HepG2 (cell line): ENCODE measurements at regions of chr5 and their contacts with region 1.

Region 1: DNA sequence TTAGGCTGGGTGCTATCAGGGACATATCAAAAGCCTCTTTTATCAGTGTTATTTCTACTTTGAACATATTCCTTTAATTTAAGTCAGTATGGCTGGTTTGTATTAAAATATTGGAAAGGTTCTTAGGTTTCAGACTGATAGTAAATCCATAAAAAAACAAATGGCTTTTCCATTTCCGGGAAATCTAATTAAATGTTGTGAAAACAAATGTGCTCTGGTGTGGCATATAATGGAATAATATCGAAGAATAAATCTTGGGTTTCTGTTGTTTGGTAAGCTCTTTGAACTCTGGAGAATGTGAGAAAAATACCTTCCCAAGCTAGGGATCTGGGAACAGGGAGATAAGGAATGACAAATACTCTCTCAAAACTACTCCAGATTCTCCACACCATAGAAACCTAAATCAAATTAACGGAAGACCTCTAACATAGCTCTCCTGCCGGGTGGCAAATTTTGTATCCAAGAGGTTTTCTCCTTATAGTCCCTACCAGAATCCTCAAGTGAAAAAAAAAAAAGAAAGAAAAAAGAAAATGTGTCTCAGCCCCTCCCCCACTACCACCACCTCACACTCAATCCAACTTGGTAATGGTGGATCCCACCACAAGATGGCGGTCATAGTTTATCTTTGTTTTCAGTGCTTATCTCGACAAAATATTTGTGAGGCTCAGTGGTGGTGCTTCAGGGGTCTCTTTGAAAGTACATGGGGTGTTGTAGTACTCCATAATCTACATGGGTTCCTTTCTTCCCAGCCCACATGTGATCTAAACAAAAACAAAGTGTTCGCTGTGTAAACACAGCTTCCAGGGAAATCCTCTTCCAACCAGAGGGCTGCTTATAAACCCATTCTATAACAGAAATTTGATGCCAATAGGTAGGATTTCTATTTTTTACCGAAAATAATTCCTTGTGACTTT is 54.6 kb upstream of the FST start:
- DNase-seq: peak; percentile 67
- ATAC-seq: peak; percentile 89
- H3K4me3 ChIP-seq: peak overlapping the region in 1 of 3 experiments; percentile 9; a peak in 1 of 6 replicates
- H3K27ac ChIP-seq: no peak overlapping the region
- H3K4me1 ChIP-seq: peaks cover 33% of the 10 kb centered on the region
- H3K27me3 ChIP-seq: no peaks in the 10 kb centered on the region
- CTCF ChIP-seq: peak; percentile 86
- EP300 ChIP-seq: no peak
- POLR2A ChIP-seq: no peak
- RAD21 ChIP-seq: peak; percentile 68; the same call in 1 of the 2 replicates

Region 2: GRCh38 chr5:53262348-53262970 is 163.4 kb before region 1 on chr5:
- CTCF ChIA-PET with region 1: interaction called, 3 read pairs
- POLR2A ChIA-PET with region 1: no interaction called
- in situ Hi-C with region 1: no loop called
- intact Hi-C with region 1: loop called (anchors 5 kb)
- DNase-seq: peak; percentile 2
- ATAC-seq: peak; percentile 48; the same call in 1 of the 3 replicates
- H3K4me3 ChIP-seq: no peak overlapping the region
- H3K27ac ChIP-seq: no peak overlapping the region
- H3K4me1 ChIP-seq: no peaks in the 10 kb centered on the region
- H3K27me3 ChIP-seq: no peaks in the 10 kb centered on the region
- CTCF ChIP-seq: peak; percentile 67
- EP300 ChIP-seq: no peak
- POLR2A ChIP-seq: no peak
- RAD21 ChIP-seq: no peak

Region 3: DNA sequence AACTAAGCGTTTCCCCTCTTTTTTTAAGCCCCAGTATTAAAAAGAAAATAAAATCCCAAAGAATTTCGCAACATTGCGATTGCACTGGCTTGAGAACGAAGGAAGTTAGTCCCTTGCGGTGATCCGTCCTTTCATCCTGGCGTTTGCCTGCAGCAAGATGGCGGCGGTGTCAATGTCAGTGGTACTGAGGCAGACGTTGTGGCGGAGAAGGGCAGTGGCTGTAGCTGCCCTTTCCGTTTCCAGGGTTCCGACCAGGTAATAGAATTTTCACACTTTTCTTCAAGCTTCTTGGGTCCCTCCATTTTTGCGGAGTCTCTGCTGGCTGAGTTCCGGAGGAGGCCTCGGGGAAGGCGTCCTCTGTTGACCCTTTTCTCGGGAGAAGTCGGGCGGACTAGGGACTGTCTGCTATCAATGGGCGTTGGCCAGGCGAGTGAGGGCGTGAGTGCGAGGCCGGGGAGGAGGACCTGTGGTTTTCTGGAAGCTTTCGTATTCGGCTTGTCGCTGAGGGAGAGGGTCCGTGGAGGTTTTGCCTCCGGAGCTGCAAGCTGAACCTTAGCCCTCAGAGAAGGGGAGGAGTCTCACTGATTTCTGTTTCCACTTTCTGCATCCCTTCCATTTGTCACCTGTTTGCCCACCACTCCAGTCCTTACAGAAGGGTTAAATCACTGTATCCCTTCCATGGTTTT is 134.8 kb after region 1 on chr5 and contains the start of gene NDUFS4:
- CTCF ChIA-PET with region 1: interaction called, 3 read pairs
- POLR2A ChIA-PET with region 1: no interaction called
- in situ Hi-C with region 1: no loop called
- intact Hi-C with region 1: loop called (anchors 5 kb)
- DNase-seq: peak; percentile 69
- ATAC-seq: peak; percentile 96
- H3K4me3 ChIP-seq: peak within 1 kb of the TSS; percentile 79 to 87 (median 81)
- H3K27ac ChIP-seq: peak within 1 kb of the TSS; percentile 82
- H3K4me1 ChIP-seq: peaks cover 33% of the 10 kb centered on the region
- H3K27me3 ChIP-seq: no peaks in the 10 kb centered on the region; a peak in 1 of 5 replicates
- CTCF ChIP-seq: no peak
- EP300 ChIP-seq: 0 out of 4 replicates have a peak, but pooled peaks of 1 of the 2 experiments have one; percentile 30
- POLR2A ChIP-seq: peak; percentile 76 to 85
- RAD21 ChIP-seq: no peak
- total RNA-seq, gene NDUFS4: 121 and 146 TPM in 2 replicates

Region 4: DNA sequence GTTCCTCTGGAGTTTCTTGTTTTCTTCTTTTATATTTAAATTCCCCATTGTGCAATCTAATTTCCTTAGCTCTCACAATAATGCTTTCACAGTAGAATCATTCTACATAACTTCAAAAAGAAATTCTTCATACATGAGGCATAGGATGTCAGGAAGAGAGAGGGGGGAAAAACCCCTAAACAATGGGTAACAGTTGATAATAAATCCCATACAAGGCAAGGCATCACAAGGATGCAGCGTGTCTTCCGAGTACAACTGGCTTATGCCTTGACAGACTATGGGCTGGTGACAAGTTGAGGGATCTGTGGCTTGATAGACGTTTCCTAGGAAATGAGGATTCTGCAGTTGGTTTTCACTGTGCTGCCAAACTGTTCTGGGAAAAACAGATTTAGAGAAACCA is 637.1 kb after region 1 on chr5:
- CTCF ChIA-PET with region 1: interaction called, 5 read pairs
- POLR2A ChIA-PET with region 1: no interaction called
- in situ Hi-C with region 1: loop called (anchors 25 kb)
- intact Hi-C with region 1: loop called (anchors 1 kb)
- DNase-seq: no peak
- ATAC-seq: no peak
- H3K4me3 ChIP-seq: no peak overlapping the region
- H3K27ac ChIP-seq: no peak overlapping the region
- H3K4me1 ChIP-seq: no peaks in the 10 kb centered on the region
- H3K27me3 ChIP-seq: no peaks in the 10 kb centered on the region
- CTCF ChIP-seq: no peak
- EP300 ChIP-seq: no peak
- POLR2A ChIP-seq: no peak
- RAD21 ChIP-seq: no peak

Region 5: GRCh38 chr5:54229041-54229780 is 803.4 kb after region 1 on chr5:
- CTCF ChIA-PET with region 1: interaction called, 4 read pairs
- POLR2A ChIA-PET with region 1: no interaction called
- in situ Hi-C with region 1: no loop called
- intact Hi-C with region 1: loop called (anchors 1 kb)
- DNase-seq: peak; percentile 25
- ATAC-seq: peak; percentile 85
- H3K4me3 ChIP-seq: no peak overlapping the region
- H3K27ac ChIP-seq: no peak overlapping the region
- H3K4me1 ChIP-seq: no peaks in the 10 kb centered on the region
- H3K27me3 ChIP-seq: no peaks in the 10 kb centered on the region
- CTCF ChIP-seq: peak; percentile 81
- EP300 ChIP-seq: no peak
- POLR2A ChIP-seq: no peak
- RAD21 ChIP-seq: no peak